Body of pancreas (tissue), 4 donors: ENCODE measurements at regions of chr9 and their contacts with region 1.

Region 1: DNA sequence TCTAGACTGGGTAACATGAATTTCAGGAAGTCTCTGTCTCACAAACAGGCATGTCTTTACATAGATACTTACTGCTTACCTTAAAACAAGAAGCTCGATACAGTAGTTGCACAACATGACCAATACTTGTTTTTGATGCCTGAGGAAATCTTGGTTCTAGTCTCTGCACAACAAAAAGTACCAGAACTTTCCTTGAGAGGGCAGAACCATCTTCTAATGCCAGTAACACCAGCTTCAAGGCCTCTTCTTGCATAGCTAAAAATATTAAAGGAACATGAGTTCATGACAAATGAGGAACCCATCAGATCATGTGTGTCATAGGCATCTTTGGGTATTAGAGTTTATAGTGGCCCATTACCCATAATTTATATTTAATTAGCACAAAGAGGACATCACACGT is 22.0 kb downstream of the RC3H2 start:
- DNase-seq: no peak
- ATAC-seq: no peak
- H3K4me3 ChIP-seq: no peak overlapping the region
- H3K27ac ChIP-seq: no peak overlapping the region
- H3K4me1 ChIP-seq: no peaks in the 10 kb centered on the region
- H3K27me3 ChIP-seq: no peaks in the 10 kb centered on the region
- CTCF ChIP-seq: no peak
- POLR2A ChIP-seq: no peak

Region 2: GRCh38 chr9:122991370-122991830 is 108.3 kb after region 1 on chr9:
- intact Hi-C with region 1: loop called (anchors 10 kb)
- DNase-seq: peak; percentile 13 to 43 (median 34)
- ATAC-seq: peak; percentile 76
- H3K4me3 ChIP-seq: no peak overlapping the region
- H3K27ac ChIP-seq: peak overlapping the region in 1 of 4 donors; percentile 28
- H3K4me1 ChIP-seq: peaks cover 5% of the 10 kb centered on the region
- H3K27me3 ChIP-seq: no peaks in the 10 kb centered on the region
- CTCF ChIP-seq: peak; percentile 43 to 89 (median 72)
- POLR2A ChIP-seq: no peak